Right ventricle myocardium inferior (tissue), 1 donor: ENCODE measurements at regions of chr1 and their contacts with region 1.

Region 1: GRCh38 chr1:150561974-150562445 is 12.8 kb downstream of the ADAMTSL4 start:
- DNase-seq: peak; percentile 97
- ATAC-seq: peak; percentile 87

Region 2: DNA sequence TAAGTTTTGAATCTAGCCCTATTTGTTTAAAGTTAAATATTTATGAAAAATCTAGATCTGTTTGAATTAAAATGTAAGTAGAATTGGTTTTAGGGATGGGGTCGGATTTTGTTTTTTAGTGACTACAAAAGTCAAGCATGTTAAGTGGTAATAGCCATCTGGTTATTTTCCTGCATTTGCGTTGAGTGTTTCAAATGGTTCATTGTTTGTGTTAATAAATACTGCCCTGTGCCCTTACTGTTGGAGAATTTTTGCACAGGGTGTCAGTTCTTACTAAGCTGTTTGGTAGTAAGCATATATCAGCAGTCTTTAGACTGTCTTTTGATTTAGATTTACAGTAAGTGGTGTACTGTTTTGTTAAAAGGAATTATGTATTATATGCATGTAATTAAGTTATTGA is 120.9 kb before region 1 on chr1:
- intact Hi-C with region 1: no loop called
- DNase-seq: no peak
- ATAC-seq: no peak

Region 3: DNA sequence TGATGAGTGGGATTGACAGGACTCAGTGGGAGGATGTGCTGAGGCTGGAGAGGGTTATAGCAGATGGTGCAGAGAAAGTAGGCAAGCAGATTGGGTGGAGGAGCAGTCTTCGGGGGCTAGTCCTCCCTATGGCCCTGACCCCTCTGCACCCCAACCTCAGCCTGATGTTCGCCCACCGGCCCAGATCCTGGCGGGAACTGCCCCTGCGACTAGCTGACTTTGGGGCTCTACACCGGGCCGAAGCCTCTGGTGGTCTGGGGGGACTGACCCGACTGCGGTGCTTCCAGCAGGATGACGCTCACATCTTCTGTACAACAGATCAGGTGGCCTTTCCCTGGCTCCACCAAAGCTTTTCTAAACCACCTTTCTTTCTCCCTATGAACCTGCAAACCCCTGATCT is 63.7 kb before region 1 on chr1:
- intact Hi-C with region 1: no loop called
- DNase-seq: no peak
- ATAC-seq: no peak

Region 4: DNA sequence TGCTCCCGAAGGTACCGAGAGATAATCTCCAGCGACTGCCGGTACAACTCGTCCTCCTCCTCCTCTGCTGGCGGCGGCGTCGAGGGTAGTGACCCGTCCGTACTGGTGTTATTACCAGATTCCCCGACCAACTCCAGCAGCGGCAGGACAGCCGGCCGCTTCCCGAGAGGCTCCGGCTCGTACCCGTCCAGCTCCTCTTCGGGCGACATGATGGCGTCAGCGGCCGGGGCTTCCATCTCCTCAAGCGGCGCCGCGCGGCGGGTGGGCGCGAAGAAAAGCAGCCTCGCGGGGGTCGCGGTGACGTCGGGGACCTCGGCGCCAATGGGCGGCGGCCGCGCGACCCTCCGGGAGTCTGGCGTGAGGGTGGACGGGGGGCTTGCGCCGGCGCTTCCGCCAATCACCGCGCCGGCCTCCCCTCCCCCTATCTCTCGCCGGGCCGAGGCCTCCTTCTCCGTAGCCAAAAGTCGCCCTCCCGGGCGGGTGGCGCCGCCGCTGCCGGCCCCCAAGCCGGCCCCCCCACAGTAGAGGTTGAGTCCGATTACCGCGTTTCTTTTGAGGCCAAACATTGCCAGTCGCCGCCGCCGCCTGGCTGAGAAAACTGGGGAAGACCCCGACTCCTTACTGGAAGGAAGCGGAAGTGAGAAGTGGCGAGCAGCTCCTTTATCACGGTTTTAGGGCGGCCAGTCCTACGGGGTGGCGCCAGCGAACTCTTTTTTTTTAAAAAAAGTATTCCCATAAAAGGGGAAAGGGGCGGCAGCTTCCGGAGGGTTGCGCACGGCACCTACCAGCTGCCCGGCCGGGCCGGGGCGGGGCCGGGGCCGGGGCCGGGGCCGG is 17.2 kb after region 1 on chr1 and contains the start of gene MCL1:
- intact Hi-C with region 1: loop called (anchors 1 kb)
- DNase-seq: peak; percentile 97
- ATAC-seq: peak; percentile 95
- total RNA-seq, gene MCL1: 99.7 TPM

Region 5: GRCh38 chr1:150596095-150596892 is 34.3 kb after region 1 on chr1:
- intact Hi-C with region 1: no loop called
- DNase-seq: no peak
- ATAC-seq: no peak

Region 6: GRCh38 chr1:150621497-150622302 is 59.7 kb after region 1 on chr1:
- intact Hi-C with region 1: loop called (anchors 1 kb)
- DNase-seq: no peak
- ATAC-seq: no peak

Region 7: DNA sequence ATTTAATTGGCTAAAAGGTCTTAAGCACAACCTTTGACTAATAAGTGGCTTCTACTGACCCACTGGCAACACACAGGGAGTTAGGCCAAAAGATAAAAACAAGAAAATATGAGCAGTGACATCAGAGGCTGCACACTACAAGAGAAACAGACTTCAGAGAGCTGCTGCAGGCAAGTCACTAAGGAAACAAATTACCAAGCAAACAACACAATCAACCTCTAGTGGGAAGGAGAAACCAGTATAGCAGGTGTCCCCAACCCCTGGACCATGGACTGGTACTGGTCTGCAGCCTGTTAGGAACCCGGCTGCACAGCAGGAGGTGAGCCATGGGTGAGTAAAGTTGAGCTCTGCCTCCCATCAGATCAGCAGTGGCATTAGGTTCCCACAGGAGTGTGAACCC is 88.2 kb after region 1 on chr1:
- intact Hi-C with region 1: no loop called
- DNase-seq: no peak
- ATAC-seq: peak; percentile 89

Region 8: GRCh38 chr1:150696590-150697524 is 134.8 kb after region 1 on chr1 and contains the start of gene GOLPH3L:
- intact Hi-C with region 1: loop called (anchors 2 kb)
- DNase-seq: peak; percentile 86
- ATAC-seq: peak; percentile 100
- total RNA-seq, gene GOLPH3L: 16.5 TPM

Region 9: DNA sequence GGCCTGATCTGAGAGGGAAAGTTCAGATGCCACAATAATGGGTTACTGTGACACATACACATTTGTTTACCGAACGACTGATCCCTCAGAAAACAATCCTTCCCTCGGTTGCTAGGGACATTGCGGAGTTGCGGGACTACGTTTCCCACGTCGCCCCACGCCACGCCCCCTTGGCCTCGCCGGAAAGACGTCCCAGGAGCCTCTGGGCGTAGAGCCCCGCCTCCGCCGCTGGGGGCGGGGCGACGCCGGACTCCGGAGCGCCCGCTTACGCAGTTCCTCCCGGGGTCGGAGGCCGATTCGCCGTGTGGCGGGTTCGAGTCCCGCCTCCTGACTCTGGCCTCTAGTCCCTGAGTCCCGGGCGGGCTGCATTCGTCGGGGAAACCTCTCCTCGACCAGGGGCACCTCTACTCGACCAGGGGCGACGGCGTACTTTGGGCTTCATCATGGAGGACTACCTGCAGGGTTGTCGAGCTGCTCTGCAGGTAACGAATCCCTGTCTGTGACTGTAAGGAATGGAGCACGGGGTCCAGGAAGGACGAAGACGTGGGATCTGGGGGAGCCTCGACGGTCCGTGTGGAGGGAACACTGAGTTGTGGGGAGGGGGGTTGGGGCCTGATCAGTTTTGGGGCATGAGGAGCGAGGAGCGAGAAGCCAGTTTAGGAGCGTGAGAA is 446.3 kb after region 1 on chr1 and contains the start of gene PRUNE1:
- intact Hi-C with region 1: loop called (anchors 2 kb)
- DNase-seq: peak; percentile 98
- ATAC-seq: peak; percentile 93
- total RNA-seq, gene PRUNE1: 42.1 TPM